Activated CD8-positive, alpha-beta T cell treated with anti-CD3 and anti-CD28 coated beads, Interleukin-2, amount 10 ng/mL, durations not matched to agents 7 days and 5 days (primary cell): ENCODE measurements at regions of chr21 and their contacts with region 1.

Region 1: DNA sequence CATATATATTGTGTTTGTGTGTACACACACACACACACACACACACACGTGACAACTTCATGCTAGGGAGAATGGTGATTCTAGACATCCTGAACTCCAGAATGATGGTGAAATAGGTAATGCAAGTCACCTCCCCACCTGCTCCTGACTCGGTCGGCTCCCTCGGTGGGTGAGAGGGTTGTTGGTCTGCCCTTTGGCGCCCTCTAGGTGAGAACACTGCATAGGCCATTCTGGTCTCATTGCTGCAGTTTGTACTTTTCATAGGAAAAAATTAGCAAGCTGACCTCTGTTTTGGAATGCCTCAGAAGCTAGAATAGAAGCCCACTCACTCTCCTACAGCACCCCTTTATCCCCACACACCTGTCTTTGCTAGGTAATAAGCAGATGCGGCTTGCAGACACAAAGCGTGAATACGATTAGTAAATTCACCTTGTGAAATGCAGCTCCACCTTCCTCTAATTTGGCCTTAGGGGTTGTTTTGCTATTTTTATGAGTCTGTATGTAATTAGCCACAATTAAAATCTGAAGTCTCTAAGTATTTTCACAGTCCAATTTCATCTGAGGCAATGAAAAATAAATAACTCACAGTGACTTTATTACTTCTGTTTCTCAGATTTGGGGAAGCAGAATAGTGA is 130.0 kb upstream of the KCNJ15 start:
- DNase-seq: peak; percentile 70
- ATAC-seq: peak; percentile 69
- H3K4me3 Mint-ChIP-seq: no peak overlapping the region
- H3K27ac Mint-ChIP-seq: no peak overlapping the region
- H3K4me1 Mint-ChIP-seq: no peaks in the 10 kb centered on the region
- H3K27me3 Mint-ChIP-seq: peaks cover 8% of the 10 kb centered on the region

Region 2: GRCh38 chr21:37711836-37712568 is 414.8 kb before region 1 on chr21:
- CTCF ChIA-PET with region 1: interaction called, 24 read pairs
- POLR2A ChIA-PET with region 1: no interaction called
- DNase-seq: peak; percentile 60
- ATAC-seq: peak; percentile 80
- H3K4me3 Mint-ChIP-seq: no peak overlapping the region
- H3K27ac Mint-ChIP-seq: no peak overlapping the region
- H3K4me1 Mint-ChIP-seq: no peaks in the 10 kb centered on the region
- H3K27me3 Mint-ChIP-seq: peaks cover 12% of the 10 kb centered on the region

Region 3: GRCh38 chr21:38289705-38290485 is 163.1 kb after region 1 on chr21:
- CTCF ChIA-PET with region 1: no interaction called
- POLR2A ChIA-PET with region 1: no interaction called
- DNase-seq: no peak
- ATAC-seq: no peak
- H3K4me3 Mint-ChIP-seq: no peak overlapping the region
- H3K27ac Mint-ChIP-seq: no peak overlapping the region
- H3K4me1 Mint-ChIP-seq: no peaks in the 10 kb centered on the region
- H3K27me3 Mint-ChIP-seq: no peaks in the 10 kb centered on the region